ENCODE measurements at regions of chrX and their contacts with region 1.

Region 1: GRCh38 chrX:71292669-71293365 is 8.7 kb upstream of the ITGB1BP2 start:
- DNase-seq: no peak
- ATAC-seq: no peak
- H3K4me3 ChIP-seq: no peak overlapping the region
- H3K27ac ChIP-seq: no peak overlapping the region
- H3K4me1 ChIP-seq: no peaks in the 10 kb centered on the region
- H3K27me3 ChIP-seq: no peaks in the 10 kb centered on the region
- CTCF ChIP-seq: no peak

Region 2: DNA sequence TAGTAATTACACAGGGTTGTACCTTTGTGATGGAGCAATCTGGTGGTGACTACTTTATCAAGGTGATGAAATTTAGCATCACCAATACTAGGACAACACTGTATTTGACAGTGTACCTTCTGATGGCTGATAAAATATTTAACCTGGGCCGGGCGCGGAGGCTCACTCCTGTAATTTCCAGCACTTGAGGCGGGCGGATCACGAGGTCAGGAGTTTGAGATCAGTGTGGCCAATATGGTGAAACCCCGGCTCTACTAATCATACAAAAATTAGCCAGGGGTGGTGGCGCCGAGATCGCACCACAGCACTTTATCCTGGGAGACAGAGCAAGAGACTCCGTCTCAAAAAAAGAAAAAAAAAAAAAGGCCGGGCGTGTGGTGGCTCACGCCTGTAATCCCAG is 71.4 kb after region 1 on chrX:
- intact Hi-C with region 1: loop called in 1 of 3 experiments (anchors 10 kb)
- DNase-seq: no peak
- ATAC-seq: no peak
- H3K4me3 ChIP-seq: no peak overlapping the region
- H3K27ac ChIP-seq: no peak overlapping the region
- H3K4me1 ChIP-seq: no peaks in the 10 kb centered on the region
- H3K27me3 ChIP-seq: no peaks in the 10 kb centered on the region
- CTCF ChIP-seq: no peak